Right ventricle myocardium superior (tissue), 1 donor: ENCODE measurements at regions of chr2 and their contacts with region 1.

Region 1: DNA sequence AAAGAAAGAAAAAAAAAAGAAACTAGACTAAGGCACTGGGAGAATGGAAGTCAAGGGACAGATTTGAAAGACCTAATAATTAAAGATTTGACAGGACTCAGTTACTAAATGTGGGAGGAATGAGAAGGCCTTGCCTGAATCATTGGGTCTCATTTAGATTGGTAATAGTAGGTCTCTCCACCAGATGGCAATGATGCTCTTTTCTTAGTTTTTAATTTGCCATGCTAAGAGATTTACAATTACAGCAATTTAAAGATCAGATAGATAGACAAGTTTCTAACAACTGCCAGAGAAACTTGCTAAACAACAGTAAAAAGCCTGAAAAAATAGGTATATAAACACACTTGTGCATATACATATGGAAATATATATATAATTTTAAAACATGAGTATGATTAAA is 153.0 kb downstream of the TMEM247 start:
- DNase-seq: no peak
- ATAC-seq: peak; percentile 67

Region 2: GRCh38 chr2:46887028-46887885 is 254.9 kb after region 1 on chr2:
- intact Hi-C with region 1: loop called (anchors 5 kb)
- DNase-seq: no peak
- ATAC-seq: no peak

Region 3: DNA sequence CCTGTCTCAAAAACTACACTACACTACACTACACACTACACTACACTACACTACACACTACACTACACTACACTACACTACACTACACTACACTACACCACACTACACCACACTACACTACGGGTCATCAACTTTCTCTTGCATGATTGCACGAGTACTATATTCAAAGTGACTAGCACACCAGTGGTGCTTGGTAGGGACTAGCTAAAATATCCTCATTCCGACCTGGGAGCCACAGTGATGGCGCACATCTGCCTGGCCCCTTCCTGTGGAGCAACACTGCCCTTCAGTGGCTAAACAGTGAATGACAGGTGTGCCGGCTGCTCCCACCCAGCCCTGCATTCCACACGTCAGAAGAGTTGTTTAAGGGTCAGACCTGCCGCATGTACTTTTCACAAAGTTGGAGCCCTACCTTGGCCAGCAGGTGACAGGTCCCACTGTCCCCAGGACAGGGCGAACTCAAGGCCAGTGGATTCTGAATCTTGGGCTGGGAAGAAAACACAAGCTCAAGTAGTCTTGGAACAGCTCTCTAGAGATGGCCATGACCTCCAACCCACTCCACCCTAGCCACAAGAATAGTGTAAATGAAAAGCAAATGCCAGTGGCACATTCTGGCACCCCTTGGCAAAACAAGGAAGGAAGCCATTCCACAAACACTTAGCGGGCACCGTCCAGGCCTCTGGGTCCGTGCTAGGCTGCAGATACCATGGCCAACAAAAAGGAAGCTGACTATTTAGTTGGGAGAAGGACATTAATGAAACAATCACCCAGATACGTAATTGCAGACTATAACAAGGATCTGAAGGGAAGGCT is 690.9 kb after region 1 on chr2:
- intact Hi-C with region 1: loop called (anchors 10 kb)
- DNase-seq: peak; percentile 82
- ATAC-seq: peak; percentile 97